ENCODE measurements at regions of chr18 and their contacts with region 1.

Region 1: DNA sequence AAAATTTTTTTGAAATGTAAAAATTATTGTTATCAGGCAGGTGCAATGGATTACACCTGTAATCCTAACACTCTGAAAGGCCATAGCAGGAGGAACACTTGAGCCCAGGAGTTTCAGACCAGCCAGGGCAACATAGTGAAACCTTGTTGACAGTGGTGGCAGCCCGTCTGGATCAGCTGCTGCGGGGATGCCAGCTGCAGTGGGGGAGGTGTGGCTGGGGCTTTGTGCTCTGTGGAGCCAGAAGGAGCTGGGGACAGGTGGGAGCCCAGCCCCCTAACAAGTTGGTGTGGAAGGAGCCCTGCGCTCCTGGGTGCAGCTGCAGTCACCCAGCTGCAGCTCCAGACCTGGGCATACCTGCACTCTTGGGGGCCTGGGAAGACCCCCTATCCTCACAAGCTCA is 182.4 kb upstream of the MC4R start:
- DNase-seq: peak in 1 of 3 donors; percentile 34
- ATAC-seq: no peak
- H3K4me3 ChIP-seq: no peak overlapping the region
- H3K27ac ChIP-seq: no peak overlapping the region
- H3K4me1 ChIP-seq: no peaks in the 10 kb centered on the region
- H3K27me3 ChIP-seq: no peaks in the 10 kb centered on the region

Region 2: GRCh38 chr18:59988098-59988706 is 566.8 kb before region 1 on chr18:
- intact Hi-C with region 1: loop called in 2 of 4 experiments (anchors 5 to 10 kb)
- DNase-seq: peak in 1 of 3 donors; percentile 30
- ATAC-seq: no peak
- H3K4me3 ChIP-seq: no peak overlapping the region
- H3K27ac ChIP-seq: no peak overlapping the region
- H3K4me1 ChIP-seq: no peaks in the 10 kb centered on the region
- H3K27me3 ChIP-seq: no peaks in the 10 kb centered on the region